Vagina (tissue), 2 donors: ENCODE measurements at regions of chr15 and their contacts with region 1.

Region 1: GRCh38 chr15:88604381-88605188 is 16.6 kb upstream of the AEN start:
- DNase-seq: no peak
- H3K4me3 ChIP-seq: no peak overlapping the region
- H3K27ac ChIP-seq: no peak overlapping the region
- H3K4me1 ChIP-seq: peaks cover 5% of the 10 kb centered on the region
- H3K27me3 ChIP-seq: no peaks in the 10 kb centered on the region
- CTCF ChIP-seq: no peak
- POLR2A ChIP-seq: no peak

Region 2: DNA sequence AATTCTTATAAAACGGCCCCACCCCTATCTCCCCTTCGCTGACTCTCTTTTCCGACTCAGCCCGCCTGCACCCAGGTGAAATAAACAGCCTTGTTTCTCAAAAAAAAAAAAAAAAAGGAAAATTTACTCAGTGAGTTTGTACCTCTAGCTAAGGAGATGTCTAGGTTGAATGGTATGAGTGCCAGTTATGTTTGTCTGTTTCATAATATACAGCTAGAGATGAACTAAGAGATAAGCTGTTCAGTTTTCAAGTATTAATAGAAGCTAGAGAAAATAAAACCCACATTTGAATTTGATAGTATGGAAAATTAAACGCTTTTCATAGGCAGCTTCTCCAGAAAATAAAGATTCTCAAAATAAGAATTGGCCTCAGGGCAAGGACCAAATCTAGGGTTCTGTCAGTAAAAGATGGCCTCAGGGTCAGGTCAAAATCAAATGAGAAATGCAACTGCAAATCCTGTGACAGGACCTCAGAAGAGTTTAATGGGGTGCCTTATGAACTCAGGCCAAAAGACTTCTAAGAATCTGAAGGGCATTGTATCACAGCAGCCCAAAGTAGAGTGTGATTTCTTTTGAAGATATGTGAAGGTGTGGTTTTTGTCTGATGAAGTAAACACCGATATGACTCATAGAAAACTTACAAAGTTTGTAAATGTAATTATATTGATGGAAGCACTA is 1559.0 kb before region 1 on chr15:
- intact Hi-C with region 1: no loop called
- DNase-seq: no peak
- H3K4me3 ChIP-seq: no peak overlapping the region
- H3K27ac ChIP-seq: no peak overlapping the region
- H3K4me1 ChIP-seq: no peaks in the 10 kb centered on the region
- H3K27me3 ChIP-seq: no peaks in the 10 kb centered on the region
- CTCF ChIP-seq: no peak
- POLR2A ChIP-seq: no peak

Region 3: DNA sequence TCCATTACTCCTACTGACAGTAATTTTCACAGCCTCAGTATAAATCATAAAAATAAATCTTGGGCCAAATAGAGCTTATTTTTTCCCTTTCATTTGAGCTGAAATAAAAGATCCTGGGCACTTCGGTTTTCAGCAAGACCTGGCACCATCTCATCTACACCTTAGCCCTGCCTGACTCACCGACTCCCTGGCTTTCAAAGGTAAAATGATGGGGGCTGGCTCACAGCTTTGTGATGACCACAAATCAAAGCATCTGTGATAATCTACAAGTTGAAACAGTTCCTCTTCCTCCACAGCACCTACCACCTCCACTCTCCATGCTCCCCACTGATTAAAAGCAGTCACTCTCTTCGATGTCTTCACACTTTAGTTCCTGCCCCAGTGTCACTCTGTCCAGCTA is 85.7 kb before region 1 on chr15:
- intact Hi-C with region 1: no loop called
- DNase-seq: no peak
- H3K4me3 ChIP-seq: no peak overlapping the region
- H3K27ac ChIP-seq: no peak overlapping the region
- H3K4me1 ChIP-seq: no peaks in the 10 kb centered on the region
- H3K27me3 ChIP-seq: no peaks in the 10 kb centered on the region
- CTCF ChIP-seq: no peak
- POLR2A ChIP-seq: no peak

Region 4: DNA sequence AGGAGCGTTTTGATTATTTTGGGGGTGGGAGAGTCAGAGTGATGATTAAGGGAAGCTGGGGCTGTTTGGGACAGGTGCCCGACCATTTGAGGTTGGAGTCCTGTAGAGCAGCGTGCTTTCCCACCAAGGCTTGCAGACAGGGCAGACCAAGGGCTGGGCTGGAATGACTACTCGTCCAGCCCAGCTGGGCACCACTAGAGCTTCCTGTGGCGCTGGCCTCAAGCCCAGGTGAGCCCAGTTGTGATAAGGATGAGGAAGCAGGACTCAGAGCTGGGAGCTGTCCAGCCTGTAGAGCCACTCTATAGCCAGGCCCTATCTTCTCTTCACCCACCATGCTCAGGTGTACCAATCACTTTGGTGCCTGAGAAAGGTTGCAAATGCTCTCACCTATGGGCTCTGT is 122.9 kb after region 1 on chr15:
- intact Hi-C with region 1: no loop called
- DNase-seq: peak; percentile 42 to 72
- H3K4me3 ChIP-seq: no peak overlapping the region
- H3K27ac ChIP-seq: no peak overlapping the region
- H3K4me1 ChIP-seq: no peaks in the 10 kb centered on the region
- H3K27me3 ChIP-seq: no peaks in the 10 kb centered on the region
- CTCF ChIP-seq: no peak
- POLR2A ChIP-seq: no peak

Region 5: DNA sequence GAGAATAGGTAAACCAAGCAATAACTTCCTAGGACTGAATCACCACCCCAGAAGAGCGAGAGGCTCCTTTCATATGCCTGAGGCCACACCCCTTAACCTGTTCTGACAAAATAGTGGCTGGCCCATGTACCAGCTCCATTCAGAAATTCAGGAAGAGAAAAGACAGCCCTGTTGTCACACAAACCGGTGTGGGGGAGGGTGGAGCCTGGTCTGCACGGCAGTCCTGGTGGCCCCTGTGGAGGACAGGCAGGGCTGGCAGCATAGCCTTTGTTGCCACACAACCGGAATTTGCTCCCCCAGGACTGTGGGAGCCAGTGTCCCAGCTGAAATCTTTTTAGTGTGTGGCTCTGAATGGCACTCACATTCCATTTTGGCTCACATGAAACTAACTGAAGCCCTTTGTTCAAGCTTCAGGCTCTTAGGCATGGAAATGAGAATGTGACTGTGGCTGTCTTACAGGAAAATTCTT is 593.0 kb after region 1 on chr15:
- intact Hi-C with region 1: loop called (anchors 5 kb)
- DNase-seq: no peak
- H3K4me3 ChIP-seq: no peak overlapping the region
- H3K27ac ChIP-seq: peak overlapping the region; percentile 27
- H3K4me1 ChIP-seq: peaks cover 23% of the 10 kb centered on the region
- H3K27me3 ChIP-seq: no peaks in the 10 kb centered on the region
- CTCF ChIP-seq: no peak
- POLR2A ChIP-seq: no peak